Astrocyte of the cerebellum (primary cell): ENCODE measurements at regions of chr1 and their contacts with region 1.

Region 1: DNA sequence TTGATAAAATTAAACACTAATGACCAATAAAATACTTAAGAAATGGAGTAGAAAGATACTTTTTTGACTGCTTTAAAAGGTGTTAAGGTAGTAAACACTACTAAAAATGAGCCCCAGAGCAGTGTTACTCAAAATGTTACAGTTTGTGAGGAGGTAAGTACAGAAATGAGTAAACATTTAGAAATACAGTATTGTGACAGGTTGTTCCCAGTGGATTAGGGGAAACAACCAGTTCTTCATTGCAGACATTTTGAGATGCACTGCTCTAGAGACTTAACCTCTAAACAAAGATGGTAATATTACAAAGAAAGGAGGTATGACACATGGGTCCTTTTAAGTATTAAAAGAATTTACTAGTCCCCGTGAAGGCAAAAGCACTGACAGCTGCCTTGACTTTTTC is 12.7 kb downstream of the DHX9 start:
- DNase-seq: no peak
- H3K4me3 ChIP-seq: no peak overlapping the region
- CTCF ChIP-seq: no peak

Region 2: DNA sequence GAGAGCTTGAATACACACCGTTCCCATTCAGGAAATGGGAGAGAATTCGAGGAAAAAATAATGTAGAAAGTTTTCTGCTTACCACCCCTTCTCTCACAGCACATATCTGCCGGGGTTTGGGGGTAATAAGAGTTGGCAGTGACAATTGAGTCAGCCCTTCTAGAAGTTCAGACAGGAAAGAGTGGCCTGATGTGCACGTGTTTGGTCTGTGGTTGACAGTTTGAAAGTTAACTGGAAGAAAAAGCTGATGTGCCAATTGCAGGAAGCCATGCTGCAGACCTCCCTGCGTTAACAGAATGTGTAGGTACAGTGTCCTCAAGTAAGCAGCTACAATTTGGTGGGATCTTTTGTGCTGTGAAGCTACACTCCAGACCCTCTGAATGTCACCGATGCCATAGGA is 38.2 kb after region 1 on chr1:
- in situ Hi-C with region 1: loop called (anchors 5 kb)
- DNase-seq: no peak
- H3K4me3 ChIP-seq: no peak overlapping the region
- CTCF ChIP-seq: no peak